WTC11 (cell line): ENCODE measurements at regions of chr5 and their contacts with region 1.

Region 1: DNA sequence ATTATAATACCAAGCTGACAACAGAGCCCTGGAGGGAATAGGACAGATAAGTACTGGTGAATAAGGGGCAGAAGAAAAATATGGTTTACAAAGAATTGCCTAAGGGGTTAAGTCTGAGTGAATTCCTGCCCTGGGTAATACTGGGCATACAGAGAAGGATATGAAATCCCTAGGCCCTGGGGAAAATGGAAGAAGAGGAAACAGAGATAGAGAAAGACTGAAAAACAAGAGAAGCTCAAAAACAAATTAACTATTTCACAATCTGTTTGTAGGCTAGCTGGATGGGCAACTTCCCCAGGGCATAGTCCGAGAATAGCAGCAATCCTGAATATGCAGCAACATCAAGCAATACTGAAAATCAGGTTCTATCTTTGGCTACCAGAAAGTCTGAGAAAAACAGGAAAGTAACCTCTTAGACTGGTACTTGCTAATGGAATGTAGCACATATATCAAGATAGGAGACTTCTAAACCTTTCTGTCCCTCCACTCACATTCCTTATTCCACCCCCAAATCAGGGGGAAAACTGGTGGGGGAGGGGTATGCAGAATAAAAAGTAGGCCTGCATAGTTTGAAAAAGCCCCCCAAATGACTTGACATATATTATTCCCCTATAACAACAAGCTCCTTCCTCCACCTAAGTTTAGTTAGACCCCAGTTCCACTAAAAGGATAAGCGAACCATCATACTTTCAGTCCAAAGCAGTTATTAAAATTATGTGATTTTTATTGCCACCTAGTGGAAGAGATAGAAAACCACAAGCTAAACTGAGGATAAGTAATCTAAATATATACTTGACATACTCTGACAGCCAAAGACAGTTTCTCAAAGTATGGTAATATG is 20.6 kb downstream of the SLC38A9 start:
- DNase-seq: no peak
- ATAC-seq: peak; percentile 39; the same call in 1 of the 2 replicates
- H3K4me3 Mint-ChIP-seq: peak overlapping the region; percentile 19; the same call in 1 of the 2 replicates
- H3K27ac Mint-ChIP-seq: peak overlapping the region; percentile 86
- H3K4me1 Mint-ChIP-seq: peaks cover 24% of the 10 kb centered on the region
- H3K27me3 Mint-ChIP-seq: no peaks in the 10 kb centered on the region; the same call in 1 of the 2 replicates
- CTCF ChIP-seq: peak; percentile 51

Region 2: GRCh38 chr5:55407059-55407684 is 284.3 kb before region 1 on chr5:
- CTCF ChIA-PET with region 1: interaction called, 23 read pairs
- POLR2A ChIA-PET with region 1: no interaction called
- DNase-seq: no peak
- ATAC-seq: peak; percentile 67
- H3K4me3 Mint-ChIP-seq: no peak overlapping the region
- H3K27ac Mint-ChIP-seq: no peak overlapping the region; the same call in 1 of the 2 replicates
- H3K4me1 Mint-ChIP-seq: no peaks in the 10 kb centered on the region
- H3K27me3 Mint-ChIP-seq: no peaks in the 10 kb centered on the region
- CTCF ChIP-seq: 0 out of 2 replicates have a peak, but pooled peaks have one; percentile 7

Region 3: GRCh38 chr5:55439008-55439407 is 252.5 kb before region 1 on chr5:
- CTCF ChIA-PET with region 1: interaction called, 21 read pairs
- POLR2A ChIA-PET with region 1: no interaction called
- DNase-seq: no peak
- ATAC-seq: peak; percentile 10
- H3K4me3 Mint-ChIP-seq: no peak overlapping the region
- H3K27ac Mint-ChIP-seq: peak overlapping the region; percentile 64
- H3K4me1 Mint-ChIP-seq: peaks cover 46% of the 10 kb centered on the region
- H3K27me3 Mint-ChIP-seq: no peaks in the 10 kb centered on the region
- CTCF ChIP-seq: no peak

Region 4: DNA sequence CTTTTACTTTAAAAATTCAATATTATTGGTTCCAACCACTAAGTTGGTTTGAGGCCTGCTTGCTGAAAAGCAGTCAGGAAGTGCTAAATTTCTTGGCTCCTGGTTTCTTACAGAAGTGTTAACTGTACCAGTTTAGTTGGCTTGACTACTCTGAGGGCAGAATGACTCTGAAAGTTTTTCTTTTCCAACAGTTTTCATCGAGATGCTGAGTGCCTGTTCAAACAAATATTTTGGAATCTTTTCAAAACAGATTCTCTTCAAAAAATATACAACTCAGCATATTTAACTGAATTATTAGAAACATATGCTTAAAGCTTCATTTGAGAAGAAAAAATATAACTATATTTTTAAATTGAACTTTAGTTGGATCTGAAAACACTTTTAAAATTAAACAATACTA is 16.4 kb before region 1 on chr5:
- CTCF ChIA-PET with region 1: interaction called, 13 read pairs
- POLR2A ChIA-PET with region 1: no interaction called
- DNase-seq: no peak
- ATAC-seq: no peak
- H3K4me3 Mint-ChIP-seq: no peak overlapping the region
- H3K27ac Mint-ChIP-seq: no peak overlapping the region
- H3K4me1 Mint-ChIP-seq: no peaks in the 10 kb centered on the region
- H3K27me3 Mint-ChIP-seq: no peaks in the 10 kb centered on the region
- CTCF ChIP-seq: no peak

Region 5: DNA sequence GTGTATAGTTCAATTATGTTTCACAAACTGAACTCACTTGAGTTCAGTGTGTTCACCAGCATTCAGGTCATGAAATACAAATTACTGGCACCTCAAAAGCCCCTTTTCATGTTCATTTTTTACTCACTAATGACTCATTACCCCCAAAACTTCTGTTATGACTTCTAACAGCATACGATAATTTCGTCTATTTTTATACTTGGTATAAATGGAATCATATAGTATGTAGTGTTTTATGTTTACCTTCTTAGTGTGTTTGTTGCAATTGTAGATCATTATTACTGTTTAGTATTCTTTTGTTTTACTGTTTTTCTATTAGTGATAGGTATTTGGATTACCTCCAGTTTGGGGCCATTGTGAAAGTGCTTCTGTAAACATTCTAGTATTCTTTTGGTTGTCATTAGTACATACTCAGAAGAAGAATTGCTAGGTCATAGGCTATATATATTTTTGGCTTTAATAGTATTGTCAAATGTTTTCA is 79.7 kb after region 1 on chr5:
- CTCF ChIA-PET with region 1: no interaction called
- POLR2A ChIA-PET with region 1: no interaction called
- DNase-seq: no peak
- ATAC-seq: no peak
- H3K4me3 Mint-ChIP-seq: no peak overlapping the region
- H3K27ac Mint-ChIP-seq: peak overlapping the region; percentile 5; the same call in 1 of the 2 replicates
- H3K4me1 Mint-ChIP-seq: peaks cover 34% of the 10 kb centered on the region
- H3K27me3 Mint-ChIP-seq: no peaks in the 10 kb centered on the region
- CTCF ChIP-seq: no peak